Naive thymus-derived CD4-positive, alpha-beta T cell (primary cell): ENCODE measurements at regions of chr14 and their contacts with region 1.

Region 1: DNA sequence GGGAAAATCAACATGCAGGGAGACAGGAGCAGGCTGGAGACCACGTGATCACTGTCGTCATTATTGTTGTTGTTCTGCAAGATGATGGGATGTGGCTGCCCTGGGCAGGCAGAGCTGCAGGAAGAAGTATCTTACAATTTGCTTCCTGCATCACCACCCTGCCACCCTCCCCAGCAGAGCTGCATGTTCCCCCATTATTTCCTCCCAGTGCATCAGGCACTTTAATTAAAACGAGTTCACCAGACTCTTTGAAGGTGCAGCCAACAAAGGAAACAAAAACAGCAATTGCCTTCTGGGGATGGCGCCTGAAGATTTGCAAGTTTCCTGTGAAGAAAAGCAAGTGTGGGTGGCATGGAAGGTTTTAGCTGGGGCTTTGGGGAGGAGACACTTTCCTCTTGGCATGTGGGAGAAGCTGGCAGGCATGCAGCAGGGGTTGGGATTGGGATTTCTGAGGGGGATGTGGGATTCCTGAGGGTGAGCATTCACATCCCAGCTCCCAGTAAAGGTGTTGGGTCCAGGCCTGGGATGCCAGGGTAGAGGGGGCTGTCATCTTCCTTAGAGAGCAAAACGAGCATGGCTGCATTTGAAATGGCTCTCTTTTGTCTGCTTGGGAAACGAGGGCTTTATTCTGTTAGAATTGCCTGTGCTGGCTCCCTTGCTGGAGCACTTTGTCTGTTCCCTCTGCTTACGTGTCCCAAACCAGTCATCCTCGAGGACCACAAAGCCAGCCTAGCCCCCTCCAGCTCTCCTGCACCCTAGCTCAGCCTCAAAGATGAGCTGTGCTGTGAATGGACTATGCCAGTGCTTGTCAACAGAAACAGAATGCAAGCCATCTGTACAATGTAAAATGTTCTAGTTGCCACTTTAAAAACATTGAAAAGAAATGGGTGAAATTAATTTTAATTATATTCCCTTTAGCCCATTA is 11.5 kb upstream of the C14orf132 start:
- DNase-seq: peak in 6 of 9 donors; percentile 8 to 66 (median 42)
- ATAC-seq: peak; percentile 64
- H3K4me3 ChIP-seq: no peak overlapping the region
- H3K4me3 Mint-ChIP-seq: peak overlapping the region in 8 of 10 donors; percentile 16 to 79 (median 56)
- H3K27ac ChIP-seq: peak overlapping the region; percentile 0
- H3K27ac Mint-ChIP-seq: peak overlapping the region; percentile 46 to 93 (median 88)
- H3K4me1 ChIP-seq: peaks cover 0 to 18% of the 10 kb centered on the region in 2 donors
- H3K4me1 Mint-ChIP-seq: peaks cover 7 to 39% (median 25%) of the 10 kb centered on the region in 7 donors
- H3K27me3 ChIP-seq: no peaks in the 10 kb centered on the region
- H3K27me3 Mint-ChIP-seq: peaks cover 0 to 7% (median 0%) of the 10 kb centered on the region in 5 donors

Region 2: GRCh38 chr14:96038920-96039632 is 11.4 kb after region 1 on chr14 and contains the start of gene C14orf132:
- CTCF ChIA-PET with region 1: interaction called, 4 read pairs
- POLR2A ChIA-PET with region 1: interaction called, 15 read pairs
- intact Hi-C with region 1: loop called in 1 of 2 experiments (anchors 1 kb)
- DNase-seq: peak; percentile 7 to 56 (median 27)
- ATAC-seq: peak; percentile 85
- H3K4me3 ChIP-seq: peak within 1 kb of the TSS; percentile 48
- H3K4me3 Mint-ChIP-seq: peak within 1 kb of the TSS; percentile 76 to 93 (median 84)
- H3K27ac ChIP-seq: peak within 1 kb of the TSS; percentile 18
- H3K27ac Mint-ChIP-seq: peak within 1 kb of the TSS in 5 of 9 donors; percentile 25 to 74 (median 62)
- H3K4me1 ChIP-seq: peaks cover 0 to 5% of the 10 kb centered on the region in 2 donors
- H3K4me1 Mint-ChIP-seq: peaks cover 11 to 44% (median 30%) of the 10 kb centered on the region in 7 donors
- H3K27me3 ChIP-seq: peaks cover 0 to 9% of the 10 kb centered on the region in 2 donors
- H3K27me3 Mint-ChIP-seq: peaks cover 0 to 53% (median 32%) of the 10 kb centered on the region in 5 donors
- total RNA-seq, gene C14orf132: 0.41 to 22.9 (median 7.8) TPM